ENCODE measurements at regions of chr5 and their contacts with region 1.

Region 1: GRCh38 chr5:59034498-59035186 is 451.8 kb downstream of the RAB3C start:
- DNase-seq: peak; percentile 34
- H3K4me3 Mint-ChIP-seq: peak overlapping the region; percentile 89
- H3K27ac Mint-ChIP-seq: peak overlapping the region; percentile 99
- H3K4me1 Mint-ChIP-seq: peaks cover 53% of the 10 kb centered on the region
- H3K27me3 Mint-ChIP-seq: no peaks in the 10 kb centered on the region

Region 2: GRCh38 chr5:58940446-58940845 is 94.2 kb before region 1 on chr5:
- CTCF ChIA-PET with region 1: no interaction called
- DNase-seq: no peak
- H3K4me3 Mint-ChIP-seq: no peak overlapping the region
- H3K27ac Mint-ChIP-seq: no peak overlapping the region
- H3K4me1 Mint-ChIP-seq: no peaks in the 10 kb centered on the region
- H3K27me3 Mint-ChIP-seq: no peaks in the 10 kb centered on the region

Region 3: DNA sequence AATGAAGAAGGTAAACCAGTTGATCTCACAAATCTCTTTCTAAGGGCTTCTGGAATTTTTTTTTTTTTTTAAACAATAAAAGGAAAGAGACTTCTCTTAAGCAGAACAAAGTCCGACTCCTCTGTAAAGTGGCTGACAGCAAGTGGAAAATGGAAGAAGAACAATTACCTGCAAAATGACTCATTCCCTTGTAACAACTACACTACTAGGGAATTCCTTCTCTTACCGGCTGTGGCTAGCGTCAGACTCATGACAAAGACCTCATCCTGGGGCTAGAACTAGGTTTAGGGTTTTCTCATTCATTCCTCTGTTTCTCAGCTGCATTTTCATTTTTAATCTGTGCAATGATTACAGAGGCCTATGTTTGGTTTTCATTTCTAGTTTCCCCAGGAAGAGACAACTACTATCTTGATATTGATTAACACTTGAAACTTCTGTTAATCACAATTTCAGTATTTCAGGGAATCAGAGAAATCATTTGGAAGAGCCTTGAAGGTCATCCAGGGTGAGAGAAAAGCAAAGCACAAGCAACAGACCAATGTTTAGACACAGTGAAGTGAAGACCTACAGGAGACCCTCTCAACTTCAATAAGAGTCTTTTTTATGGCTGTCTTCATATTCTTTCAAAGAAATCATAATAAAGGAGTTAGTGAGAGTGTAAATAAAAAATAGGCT is 13.9 kb before region 1 on chr5:
- CTCF ChIA-PET with region 1: interaction called, 10 read pairs
- DNase-seq: no peak
- H3K4me3 Mint-ChIP-seq: no peak overlapping the region
- H3K27ac Mint-ChIP-seq: peak overlapping the region; percentile 52
- H3K4me1 Mint-ChIP-seq: peaks cover 56% of the 10 kb centered on the region
- H3K27me3 Mint-ChIP-seq: no peaks in the 10 kb centered on the region

Region 4: DNA sequence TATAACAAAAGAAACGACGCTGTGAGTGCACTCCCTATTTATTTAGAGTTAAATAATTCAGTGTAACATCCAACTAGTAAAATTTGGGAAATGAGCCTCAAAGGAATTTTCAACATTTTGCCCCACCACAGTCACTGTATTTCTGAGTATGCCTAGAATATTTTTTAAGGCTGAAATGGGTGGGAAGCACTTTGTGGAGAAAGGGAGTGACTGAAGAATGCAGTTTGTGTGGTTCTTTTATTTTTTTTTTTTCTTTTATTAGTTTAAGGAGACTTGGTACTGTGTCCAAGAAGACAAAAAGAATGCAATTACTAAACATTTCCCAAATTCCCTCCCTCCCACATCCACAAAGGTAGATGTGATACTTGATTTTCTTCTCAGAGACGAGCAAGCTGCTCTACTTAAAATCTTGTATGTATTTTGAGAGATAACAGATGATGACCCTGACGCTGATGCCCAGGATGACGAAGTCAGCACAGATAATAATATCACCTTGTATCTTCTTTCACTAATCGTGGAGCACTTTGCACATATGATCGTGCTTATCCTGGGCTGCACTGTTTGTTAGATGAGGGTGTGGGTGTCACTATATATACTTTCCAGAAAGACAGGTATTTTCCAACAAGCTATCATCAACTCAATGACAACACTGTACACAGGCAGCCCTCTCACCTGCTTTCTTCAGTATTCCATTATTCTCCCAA is 134.6 kb after region 1 on chr5:
- CTCF ChIA-PET with region 1: interaction called, 136 read pairs
- DNase-seq: no peak
- H3K4me3 Mint-ChIP-seq: no peak overlapping the region
- H3K27ac Mint-ChIP-seq: no peak overlapping the region
- H3K4me1 Mint-ChIP-seq: peaks cover 35% of the 10 kb centered on the region
- H3K27me3 Mint-ChIP-seq: peaks cover 14% of the 10 kb centered on the region

Measured in activated naive CD4-positive, alpha-beta T cell treated with anti-CD3 and anti-CD28 coated beads, Interleukin-2, amount 10 ng/mL, durations not matched to agents 7 days and 5 days (primary cell).